ENCODE measurements at regions of chr3 and their contacts with region 1.

Region 1: GRCh38 chr3:169772897-169773828 is at the start of gene MYNN:
- H3K4me3 Mint-ChIP-seq: peak within 1 kb of the TSS; percentile 93
- H3K27ac Mint-ChIP-seq: peak within 1 kb of the TSS; percentile 99
- H3K4me1 Mint-ChIP-seq: peaks cover 14% of the 10 kb centered on the region
- H3K27me3 Mint-ChIP-seq: no peaks in the 10 kb centered on the region

Region 2: DNA sequence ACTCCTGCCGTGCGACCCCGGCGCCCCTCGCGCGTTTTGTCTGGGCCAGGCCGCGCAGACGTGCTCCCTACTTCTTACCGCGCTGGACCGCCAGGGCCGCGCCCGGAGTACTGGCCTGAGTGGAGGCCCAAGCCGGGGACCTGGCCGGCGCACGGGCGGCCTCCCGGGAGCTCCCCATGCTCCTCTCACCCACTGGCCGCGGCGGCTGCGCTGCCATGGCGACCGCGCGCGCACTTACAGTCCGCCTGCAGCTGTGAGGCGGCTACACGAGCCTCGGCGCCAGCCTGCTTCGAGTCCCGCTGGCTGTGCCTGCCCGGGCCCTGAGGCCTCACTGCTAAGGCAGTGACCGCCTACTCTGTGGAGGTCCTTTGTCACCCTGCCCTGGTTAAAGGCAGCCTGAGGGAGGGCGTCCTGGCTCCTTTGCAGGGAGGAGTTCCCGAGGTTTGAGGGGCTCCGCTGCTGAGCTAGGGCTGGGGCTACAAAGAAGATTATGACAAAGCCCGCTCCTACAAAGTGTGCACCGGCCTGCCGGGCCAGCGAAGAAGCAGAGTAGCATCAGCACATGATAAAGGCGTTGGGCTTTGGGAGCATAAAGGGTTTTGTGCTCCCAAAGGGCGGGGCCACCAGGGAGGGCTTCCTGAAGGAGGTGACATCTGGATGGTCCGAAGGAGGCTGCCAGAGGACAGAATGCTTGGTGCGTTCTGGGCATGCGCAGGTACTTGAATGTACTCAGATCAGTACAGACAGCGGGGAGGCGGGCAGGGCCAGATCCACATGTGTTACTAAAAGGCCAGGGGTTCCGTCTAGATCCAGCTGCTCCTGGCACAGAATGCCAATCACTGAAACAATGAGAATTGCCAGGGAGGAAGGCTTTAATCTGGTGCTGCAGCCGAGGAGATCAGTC is 39.4 kb after region 1 on chr3 and contains the starts of genes LRRC34 and LRRIQ4:
- intact Hi-C with region 1: loop called (anchors 5 kb)
- H3K4me3 Mint-ChIP-seq: peak within 1 kb of the TSS; percentile 80
- H3K27ac Mint-ChIP-seq: peak within 1 kb of the TSS; percentile 75
- H3K4me1 Mint-ChIP-seq: peaks cover 37% of the 10 kb centered on the region
- H3K27me3 Mint-ChIP-seq: peaks cover 22% of the 10 kb centered on the region

Region 3: GRCh38 chr3:169822983-169823382 is 49.8 kb after region 1 on chr3:
- intact Hi-C with region 1: no loop called
- H3K4me3 Mint-ChIP-seq: no peak overlapping the region
- H3K27ac Mint-ChIP-seq: no peak overlapping the region
- H3K4me1 Mint-ChIP-seq: peaks cover 6% of the 10 kb centered on the region
- H3K27me3 Mint-ChIP-seq: peaks cover 3% of the 10 kb centered on the region

Region 4: DNA sequence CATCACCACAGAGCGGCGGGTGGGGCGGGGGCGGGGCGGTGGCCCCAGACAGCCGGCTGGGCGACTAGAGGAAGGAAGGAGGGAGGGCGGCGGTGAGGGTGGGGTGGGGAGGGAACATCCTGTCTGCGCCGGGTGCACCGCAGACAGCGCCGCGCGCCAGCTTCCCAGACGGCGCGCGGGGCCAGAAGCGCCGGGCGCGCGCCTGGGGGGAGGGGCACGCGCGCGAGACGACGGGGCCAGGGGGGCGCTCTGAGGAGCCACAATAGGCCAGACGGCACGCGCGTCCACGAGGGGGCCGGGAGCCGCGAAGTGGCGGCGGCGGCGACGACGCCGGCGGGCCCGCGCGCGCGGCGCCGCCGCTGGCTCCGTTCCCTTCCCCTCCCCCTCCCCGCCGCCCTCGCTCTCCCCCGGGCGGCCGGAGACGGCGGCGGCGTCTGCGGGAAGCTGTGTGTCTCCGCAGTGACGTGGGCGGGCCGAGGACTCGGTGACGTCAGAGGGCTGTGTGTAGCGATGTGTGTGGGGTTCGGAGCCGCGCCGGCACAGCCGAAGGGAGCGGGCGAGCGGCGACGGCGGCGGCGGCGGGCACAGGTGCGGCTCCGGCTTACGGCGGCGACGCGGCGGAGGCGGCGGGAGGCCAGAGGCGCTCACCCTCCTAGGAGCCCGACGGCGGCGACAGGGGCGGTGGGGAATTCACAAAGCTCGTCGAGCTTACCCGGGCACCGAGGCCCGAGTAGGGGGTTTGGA is 584.2 kb after region 1 on chr3 and contains the start of gene SKIL:
- intact Hi-C with region 1: loop called (anchors 5 kb)
- H3K4me3 Mint-ChIP-seq: peak within 1 kb of the TSS; percentile 90
- H3K27ac Mint-ChIP-seq: peak within 1 kb of the TSS; percentile 99
- H3K4me1 Mint-ChIP-seq: peaks cover 61% of the 10 kb centered on the region
- H3K27me3 Mint-ChIP-seq: no peaks in the 10 kb centered on the region